ENCODE measurements at regions of chr13 and their contacts with region 1.

Region 1: DNA sequence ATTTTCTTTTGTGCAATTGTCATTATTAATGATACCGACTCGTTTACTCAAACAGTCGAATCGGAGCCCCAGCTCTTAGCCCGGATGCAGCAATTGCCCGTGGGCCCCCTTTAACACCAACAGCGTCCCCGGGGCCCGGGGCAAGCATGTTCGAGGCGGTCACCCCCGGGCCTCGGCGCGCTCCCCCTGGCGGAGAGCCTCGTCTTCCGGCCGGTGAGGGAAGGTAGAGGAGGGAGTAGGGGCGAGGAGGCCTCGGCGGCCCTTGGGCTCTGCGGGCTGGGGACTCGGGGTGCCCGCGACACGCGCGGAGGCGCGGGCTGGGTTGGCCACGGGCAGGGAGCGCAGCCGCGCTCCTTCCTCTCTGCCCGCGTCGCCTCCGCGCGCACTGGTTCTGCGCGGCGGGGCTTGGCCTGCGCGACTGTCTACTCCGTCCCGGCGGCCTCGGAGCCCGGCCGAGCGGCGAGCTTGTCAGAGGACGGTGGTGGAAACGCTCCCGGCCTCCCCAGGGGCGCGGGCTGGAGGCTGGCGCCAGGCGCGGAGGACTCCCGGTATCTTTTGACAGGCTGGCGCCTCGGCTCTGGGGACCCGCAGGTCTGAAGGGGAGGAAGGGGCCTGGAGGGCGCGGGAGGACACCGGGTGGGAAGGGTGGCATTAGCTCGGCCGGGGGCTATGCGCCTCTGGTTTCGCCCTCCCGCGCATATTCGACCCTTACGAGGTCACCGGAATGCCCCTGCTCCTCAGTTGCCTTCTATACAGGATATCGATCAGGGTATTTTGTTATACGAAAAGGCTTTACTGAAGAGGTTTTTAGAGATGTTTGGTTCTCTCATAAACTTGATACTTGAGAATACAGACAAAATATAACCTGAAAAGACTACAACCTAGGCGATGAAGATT is 1.5 kb downstream of the BIVM start:
- DNase-seq: peak; percentile 86 to 88
- ATAC-seq: peak; percentile 80 to 90 (median 88)
- H3K4me3 ChIP-seq: peak overlapping the region; percentile 73 to 99 (median 84)
- H3K27ac ChIP-seq: peak overlapping the region; percentile 78 to 95 (median 90)
- H3K4me1 ChIP-seq: peaks cover 0 to 57% (median 35%) of the 10 kb centered on the region in 9 donors
- H3K27me3 ChIP-seq: peaks cover 0 to 26% (median 0%) of the 10 kb centered on the region in 7 donors
- CTCF ChIP-seq: peak; percentile 76 to 92 (median 80)

Region 2: DNA sequence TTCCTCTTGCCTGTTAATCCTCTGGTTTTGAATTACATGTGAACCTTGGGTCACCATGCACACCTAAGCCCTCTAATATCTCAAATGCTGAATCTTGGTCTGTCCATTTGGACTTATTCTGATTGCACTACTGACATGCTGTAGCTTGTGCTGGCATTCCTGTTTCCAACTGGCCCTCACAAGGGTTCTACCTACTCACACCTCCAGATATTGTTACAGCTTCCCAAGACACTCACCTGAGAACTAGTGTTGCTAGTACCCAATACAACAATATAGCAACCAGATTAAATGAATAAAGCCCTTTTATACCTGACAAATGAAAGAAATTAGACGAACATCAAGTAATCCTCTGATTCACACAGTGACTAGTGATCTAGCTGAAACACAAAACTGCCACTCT is 43.4 kb before region 1 on chr13:
- intact Hi-C with region 1: no loop called
- DNase-seq: no peak
- ATAC-seq: no peak
- H3K4me3 ChIP-seq: no peak overlapping the region
- H3K27ac ChIP-seq: no peak overlapping the region
- H3K4me1 ChIP-seq: peaks cover 0 to 4% (median 0%) of the 10 kb centered on the region in 9 donors
- H3K27me3 ChIP-seq: no peaks in the 10 kb centered on the region
- CTCF ChIP-seq: no peak

Region 3: GRCh38 chr13:102773441-102774215 is 26.8 kb before region 1 on chr13 and contains the start of gene TEX30:
- intact Hi-C with region 1: loop called in 1 of 10 experiments (anchors 2 kb)
- DNase-seq: peak; percentile 81 to 89
- ATAC-seq: peak; percentile 99 to 100 (median 99)
- H3K4me3 ChIP-seq: peak within 1 kb of the TSS; percentile 63 to 96 (median 86)
- H3K27ac ChIP-seq: peak within 1 kb of the TSS; percentile 32 to 93 (median 83)
- H3K4me1 ChIP-seq: peaks cover 0 to 30% (median 12%) of the 10 kb centered on the region in 9 donors
- H3K27me3 ChIP-seq: no peaks in the 10 kb centered on the region
- CTCF ChIP-seq: peak in 4 of 9 donors; percentile 13 to 23 (median 18)
- total RNA-seq, gene TEX30: 3.9 to 12.3 (median 7.6) TPM

Region 4: DNA sequence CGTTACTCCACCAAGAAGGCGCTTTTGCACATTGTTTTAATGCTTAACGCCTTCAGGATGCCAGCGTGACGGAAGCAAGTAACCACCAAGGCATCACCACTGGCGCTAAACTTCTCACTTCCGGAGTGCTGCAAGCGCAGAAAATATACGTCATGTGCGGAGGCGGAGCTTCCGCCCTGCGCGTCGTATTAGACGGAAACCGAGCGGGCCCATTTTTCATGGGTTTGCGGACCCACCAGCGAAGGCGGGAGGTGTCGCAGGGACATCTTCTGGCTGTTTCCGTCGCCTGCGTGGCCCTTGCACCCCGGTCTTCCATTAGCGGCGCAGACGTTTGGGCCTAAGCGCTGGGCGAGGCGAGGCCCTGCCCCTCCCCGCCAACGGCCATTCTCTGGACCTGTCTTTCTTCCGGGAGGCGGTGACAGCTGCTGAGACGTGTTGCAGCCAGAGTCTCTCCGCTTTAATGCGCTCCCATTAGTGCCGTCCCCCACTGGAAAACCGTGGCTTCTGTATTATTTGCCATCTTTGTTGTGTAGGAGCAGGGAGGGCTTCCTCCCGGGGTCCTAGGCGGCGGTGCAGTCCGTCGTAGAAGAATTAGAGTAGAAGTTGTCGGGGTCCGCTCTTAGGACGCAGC is 45.4 kb after region 1 on chr13 and contains the start of gene ERCC5:
- intact Hi-C with region 1: loop called in 4 of 10 experiments (anchors 2 to 5 kb)
- DNase-seq: peak; percentile 93 to 96
- ATAC-seq: peak; percentile 93 to 97 (median 95)
- H3K4me3 ChIP-seq: peak within 1 kb of the TSS; percentile 76 to 98 (median 88)
- H3K27ac ChIP-seq: peak within 1 kb of the TSS; percentile 88 to 98 (median 95)
- H3K4me1 ChIP-seq: peaks cover 0 to 37% (median 28%) of the 10 kb centered on the region in 9 donors
- H3K27me3 ChIP-seq: no peaks in the 10 kb centered on the region
- CTCF ChIP-seq: peak in 1 of 9 donors; percentile 12
- total RNA-seq, gene ERCC5: 26.5 to 37.7 (median 33.4) TPM

Measured in heart right ventricle (tissue), 16 donors.